ENCODE measurements at regions of chr20 and their contacts with region 1.

Region 1: GRCh38 chr20:38875175-38875993 is 50.8 kb upstream of the FAM83D start:
- DNase-seq: no peak
- H3K4me3 Mint-ChIP-seq: no peak overlapping the region
- H3K27ac Mint-ChIP-seq: no peak overlapping the region
- H3K4me1 Mint-ChIP-seq: peaks cover 21% of the 10 kb centered on the region
- H3K27me3 Mint-ChIP-seq: no peaks in the 10 kb centered on the region
- CTCF ChIP-seq: no peak

Region 2: GRCh38 chr20:38859070-38859690 is 16.2 kb before region 1 on chr20:
- CTCF ChIA-PET with region 1: interaction called, 21 read pairs
- POLR2A ChIA-PET with region 1: interaction called, 3 read pairs
- intact Hi-C with region 1: no loop called
- DNase-seq: no peak
- H3K4me3 Mint-ChIP-seq: no peak overlapping the region
- H3K27ac Mint-ChIP-seq: no peak overlapping the region
- H3K4me1 Mint-ChIP-seq: no peaks in the 10 kb centered on the region
- H3K27me3 Mint-ChIP-seq: no peaks in the 10 kb centered on the region
- CTCF ChIP-seq: no peak

Measured in MCF 10A (cell line).